Panc1 (cell line): ENCODE measurements at regions of chr11 and their contacts with region 1.

Region 1: GRCh38 chr11:9384535-9385303 is at the start of gene IPO7:
- DNase-seq: peak; percentile 38
- ATAC-seq: peak; percentile 97
- H3K4me3 ChIP-seq: peak within 1 kb of the TSS; percentile 77 to 88
- H3K27ac ChIP-seq: peak within 1 kb of the TSS; percentile 87
- H3K4me1 ChIP-seq: peaks cover 26% of the 10 kb centered on the region
- H3K27me3 ChIP-seq: no peaks in the 10 kb centered on the region
- CTCF ChIP-seq: no peak
- total RNA-seq, gene IPO7: 273 TPM

Region 2: DNA sequence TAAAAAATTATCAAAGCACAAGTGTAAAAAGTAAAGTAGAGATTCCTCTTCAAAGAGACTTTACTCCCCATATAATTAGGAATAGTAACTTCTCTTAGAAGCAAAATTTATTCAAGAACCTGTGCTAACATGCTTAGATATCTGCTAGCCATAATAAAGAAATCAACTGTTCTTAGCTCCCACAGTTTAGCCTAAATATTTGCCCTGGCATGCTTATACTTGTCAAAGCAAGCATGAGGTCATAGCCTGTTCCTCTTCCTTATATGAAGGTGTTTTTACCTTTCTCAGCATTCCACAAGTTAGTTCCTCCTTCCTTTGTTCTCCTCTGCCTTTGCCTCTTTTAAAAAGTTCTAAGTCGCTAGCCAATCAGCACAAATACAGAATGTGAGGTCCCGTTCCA is 1246.2 kb before region 1 on chr11:
- CTCF ChIA-PET with region 1: no interaction called
- POLR2A ChIA-PET with region 1: no interaction called
- in situ Hi-C with region 1: no loop called
- intact Hi-C with region 1: no loop called
- DNase-seq: no peak
- ATAC-seq: no peak
- H3K4me3 ChIP-seq: no peak overlapping the region
- H3K27ac ChIP-seq: no peak overlapping the region
- H3K4me1 ChIP-seq: no peaks in the 10 kb centered on the region
- H3K27me3 ChIP-seq: no peaks in the 10 kb centered on the region
- CTCF ChIP-seq: no peak

Region 3: DNA sequence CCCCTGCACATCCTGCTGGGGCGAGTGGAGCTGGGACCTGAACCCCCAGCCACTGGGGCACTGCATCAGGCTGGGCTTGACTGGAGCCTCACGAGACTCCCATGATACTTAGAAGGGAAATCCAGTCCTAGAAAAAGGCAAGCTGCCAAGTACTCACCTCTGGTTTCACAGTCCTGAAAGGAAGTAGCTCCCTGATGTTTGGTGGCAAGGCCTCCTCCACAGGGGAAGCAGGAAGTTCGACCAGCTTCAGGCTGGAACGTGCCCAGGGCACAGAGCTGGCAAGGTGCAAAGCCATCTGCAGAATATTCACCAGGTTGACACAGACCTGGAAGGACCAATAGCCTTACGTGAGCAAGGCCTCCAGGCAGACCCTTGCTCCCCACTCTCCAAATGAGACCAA is 354.1 kb before region 1 on chr11:
- CTCF ChIA-PET with region 1: no interaction called
- POLR2A ChIA-PET with region 1: no interaction called
- in situ Hi-C with region 1: no loop called
- intact Hi-C with region 1: no loop called
- DNase-seq: no peak
- ATAC-seq: no peak; the same call in 1 of the 2 replicates
- H3K4me3 ChIP-seq: no peak overlapping the region
- H3K27ac ChIP-seq: no peak overlapping the region
- H3K4me1 ChIP-seq: no peaks in the 10 kb centered on the region
- H3K27me3 ChIP-seq: no peaks in the 10 kb centered on the region
- CTCF ChIP-seq: no peak

Region 4: GRCh38 chr11:9170450-9170849 is 214.3 kb before region 1 on chr11:
- CTCF ChIA-PET with region 1: interaction called, 3 read pairs
- POLR2A ChIA-PET with region 1: no interaction called
- in situ Hi-C with region 1: no loop called
- intact Hi-C with region 1: loop called (anchors 10 kb)
- DNase-seq: no peak
- ATAC-seq: no peak
- H3K4me3 ChIP-seq: no peak overlapping the region
- H3K27ac ChIP-seq: no peak overlapping the region
- H3K4me1 ChIP-seq: no peaks in the 10 kb centered on the region
- H3K27me3 ChIP-seq: no peaks in the 10 kb centered on the region
- CTCF ChIP-seq: no peak

Region 5: GRCh38 chr11:9363954-9364912 is 20.5 kb before region 1 on chr11:
- CTCF ChIA-PET with region 1: no interaction called
- POLR2A ChIA-PET with region 1: interaction called, 10 read pairs
- in situ Hi-C with region 1: no loop called
- intact Hi-C with region 1: no loop called
- DNase-seq: peak; percentile 95
- ATAC-seq: peak; percentile 98
- H3K4me3 ChIP-seq: peak overlapping the region; percentile 29 to 63
- H3K27ac ChIP-seq: peak overlapping the region; percentile 84
- H3K4me1 ChIP-seq: peaks cover 34% of the 10 kb centered on the region
- H3K27me3 ChIP-seq: no peaks in the 10 kb centered on the region
- CTCF ChIP-seq: no peak

Region 6: GRCh38 chr11:9460322-9461067 is 75.8 kb after region 1 on chr11 and contains the start of gene ZNF143:
- CTCF ChIA-PET with region 1: no interaction called
- POLR2A ChIA-PET with region 1: interaction called, 18 read pairs
- in situ Hi-C with region 1: no loop called
- intact Hi-C with region 1: no loop called
- DNase-seq: peak; percentile 100
- ATAC-seq: peak; percentile 95
- H3K4me3 ChIP-seq: peak within 1 kb of the TSS; percentile 94
- H3K27ac ChIP-seq: peak within 1 kb of the TSS; percentile 100
- H3K4me1 ChIP-seq: peaks cover 23% of the 10 kb centered on the region
- H3K27me3 ChIP-seq: no peaks in the 10 kb centered on the region
- CTCF ChIP-seq: no peak
- total RNA-seq, gene ZNF143: 30.2 TPM